ENCODE measurements at regions of chr3 and their contacts with region 1.

Region 1: DNA sequence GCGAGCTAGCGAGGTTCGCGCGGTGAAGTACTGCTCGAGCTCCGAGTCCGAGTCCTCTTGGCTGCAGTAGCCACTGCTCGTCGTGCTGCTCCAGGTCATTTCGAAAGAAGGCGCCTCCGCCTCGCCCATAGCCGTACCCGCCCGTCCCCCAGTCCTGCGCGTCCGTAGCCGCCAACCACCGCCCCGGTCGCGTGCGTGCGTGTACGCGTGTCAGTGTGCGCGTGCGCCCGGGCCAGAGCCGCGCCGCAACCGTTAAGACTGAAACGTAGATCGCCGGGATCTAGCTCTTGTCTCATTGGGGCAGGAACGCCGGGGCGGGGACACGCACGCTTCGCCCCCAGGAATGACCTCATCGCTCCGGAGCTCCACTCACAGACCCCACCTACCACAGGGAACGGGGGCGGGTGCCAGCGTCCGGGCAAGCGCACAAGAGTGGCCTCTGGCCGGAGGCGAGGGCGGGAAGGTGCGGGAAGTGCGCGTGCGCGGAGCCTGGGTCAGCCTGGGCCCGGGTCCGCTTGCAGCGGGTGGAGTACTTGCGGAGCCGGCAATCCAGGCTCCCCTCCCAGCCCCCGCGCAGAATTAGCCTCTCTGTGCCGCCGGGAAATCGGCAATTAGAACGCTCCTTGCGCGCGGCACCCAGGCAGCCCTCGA is 3.3 kb downstream of the RASSF1 start:
- DNase-seq: peak; percentile 90
- ATAC-seq: peak; percentile 83
- H3K4me3 Mint-ChIP-seq: peak overlapping the region; percentile 95
- H3K27ac Mint-ChIP-seq: peak overlapping the region; percentile 98
- H3K4me1 Mint-ChIP-seq: peaks cover 66% of the 10 kb centered on the region
- H3K27me3 Mint-ChIP-seq: no peaks in the 10 kb centered on the region
- CTCF ChIP-seq: no peak

Region 2: GRCh38 chr3:50292159-50293078 is 44.9 kb before region 1 on chr3 and contains the start of gene IFRD2:
- CTCF ChIA-PET with region 1: no interaction called
- POLR2A ChIA-PET with region 1: interaction called, 25 read pairs
- intact Hi-C with region 1: no loop called
- DNase-seq: peak; percentile 87
- ATAC-seq: peak; percentile 99
- H3K4me3 Mint-ChIP-seq: peak within 1 kb of the TSS; percentile 86
- H3K27ac Mint-ChIP-seq: peak within 1 kb of the TSS; percentile 95
- H3K4me1 Mint-ChIP-seq: peaks cover 20% of the 10 kb centered on the region
- H3K27me3 Mint-ChIP-seq: no peaks in the 10 kb centered on the region
- CTCF ChIP-seq: no peak
- total RNA-seq, gene IFRD2: 92.2 and 105 TPM in 2 replicates

Region 3: DNA sequence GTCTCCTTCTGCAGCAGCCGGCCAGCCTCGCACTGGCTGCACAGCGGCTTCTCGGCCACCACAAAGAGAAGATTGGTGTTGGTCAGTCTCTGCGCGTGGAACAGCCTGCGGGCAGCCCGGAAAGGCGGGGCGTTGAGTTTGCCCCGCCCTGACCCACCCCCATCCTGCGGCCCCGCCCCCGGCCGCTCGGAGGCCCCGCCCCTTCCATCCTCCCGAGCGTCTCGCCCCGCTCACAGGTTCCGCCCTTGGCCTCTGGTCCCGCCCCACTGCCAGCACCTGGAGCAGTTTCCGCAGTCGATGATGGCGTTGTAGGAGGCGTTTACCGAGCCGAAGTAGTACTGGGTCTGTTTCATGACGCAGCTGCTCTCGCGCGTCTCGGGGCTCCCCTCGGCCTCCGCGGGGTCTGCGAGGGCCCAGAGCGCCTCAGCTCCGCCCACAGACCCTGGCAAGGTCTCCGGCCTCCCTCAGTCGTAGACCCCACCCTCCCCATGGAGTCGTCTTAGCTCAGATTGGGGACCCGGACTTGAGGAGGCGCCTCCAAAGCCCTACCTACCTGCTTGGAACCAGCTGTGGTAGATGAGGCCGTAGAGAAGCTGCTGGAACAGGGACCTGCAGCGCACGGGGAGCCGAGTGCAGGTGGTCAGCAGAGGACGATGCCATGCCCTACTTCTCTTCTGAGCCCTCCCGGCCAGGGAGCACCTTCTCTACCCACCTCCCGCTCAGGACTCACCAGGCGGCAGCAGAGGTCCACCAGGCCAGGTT is 27.9 kb after region 1 on chr3:
- CTCF ChIA-PET with region 1: no interaction called
- POLR2A ChIA-PET with region 1: interaction called, 12 read pairs
- intact Hi-C with region 1: no loop called
- DNase-seq: peak; percentile 85
- ATAC-seq: peak; percentile 97
- H3K4me3 Mint-ChIP-seq: peak overlapping the region; percentile 85
- H3K27ac Mint-ChIP-seq: peak overlapping the region; percentile 83
- H3K4me1 Mint-ChIP-seq: peaks cover 19% of the 10 kb centered on the region
- H3K27me3 Mint-ChIP-seq: peaks cover 2% of the 10 kb centered on the region
- CTCF ChIP-seq: no peak